Dorsolateral prefrontal cortex (tissue), 120 donors: ENCODE measurements at regions of chr6 and their contacts with region 1.

Region 1: GRCh38 chr6:132669690-132670291 is 10.8 kb upstream of the TAAR1 start:
- DNase-seq: no peak
- H3K4me3 ChIP-seq: peak overlapping the region in 5 of 59 donors; percentile 7 to 40 (median 32)
- H3K27ac ChIP-seq: no peak overlapping the region
- H3K27me3 ChIP-seq: no peaks in the 10 kb centered on the region
- CTCF ChIP-seq: peak; percentile 30 to 78 (median 59)

Region 2: GRCh38 chr6:132768051-132768517 is 98.3 kb after region 1 on chr6:
- intact Hi-C with region 1: loop called in 1 of 2 experiments (anchors 10 kb)
- DNase-seq: no peak
- H3K4me3 ChIP-seq: no peak overlapping the region
- H3K27ac ChIP-seq: no peak overlapping the region
- H3K27me3 ChIP-seq: no peaks in the 10 kb centered on the region
- CTCF ChIP-seq: peak in 40 of 56 donors; percentile 8 to 56 (median 26)

Region 3: GRCh38 chr6:132798869-132799538 is 129.2 kb after region 1 on chr6:
- intact Hi-C with region 1: loop called in 1 of 2 experiments (anchors 10 kb)
- DNase-seq: peak in 9 of 10 donors; percentile 38 to 72 (median 60)
- H3K4me3 ChIP-seq: peak overlapping the region in 38 of 59 donors; percentile 60 to 92 (median 77)
- H3K27ac ChIP-seq: peak overlapping the region in 24 of 59 donors; percentile 25 to 92 (median 80)
- H3K27me3 ChIP-seq: no peaks in the 10 kb centered on the region
- CTCF ChIP-seq: peak; percentile 43 to 74 (median 62)